B cell (primary cell): ENCODE measurements at regions of chr14 and their contacts with region 1.

Region 1: GRCh38 chr14:64986578-64987571 is at the start of gene FNTB:
- DNase-seq: peak; percentile 98
- ATAC-seq: peak; percentile 90
- H3K4me3 ChIP-seq: peak within 1 kb of the TSS; percentile 63 to 92 (median 84)
- H3K4me3 Mint-ChIP-seq: peak within 1 kb of the TSS; percentile 100
- H3K27ac ChIP-seq: peak within 1 kb of the TSS; percentile 65 to 70
- H3K27ac Mint-ChIP-seq: peak within 1 kb of the TSS; percentile 98
- H3K4me1 ChIP-seq: peaks cover 25% of the 10 kb centered on the region in 2 donors
- H3K4me1 Mint-ChIP-seq: peaks cover 41% of the 10 kb centered on the region
- H3K27me3 ChIP-seq: peaks cover 0 to 6% (median 3%) of the 10 kb centered on the region in 4 experiments
- H3K27me3 Mint-ChIP-seq: peaks cover 18% of the 10 kb centered on the region
- CTCF ChIP-seq: peak; percentile 79
- total RNA-seq, gene FNTB: 7.7 and 10.2 TPM in 2 replicates

Region 2: GRCh38 chr14:64400829-64401459 is 585.9 kb before region 1 on chr14:
- CTCF ChIA-PET with region 1: no interaction called
- POLR2A ChIA-PET with region 1: no interaction called
- intact Hi-C with region 1: no loop called
- DNase-seq: no peak
- ATAC-seq: no peak
- H3K4me3 ChIP-seq: peak overlapping the region in 1 of 5 experiments; percentile 3
- H3K4me3 Mint-ChIP-seq: peak overlapping the region; percentile 23
- H3K27ac ChIP-seq: no peak overlapping the region
- H3K27ac Mint-ChIP-seq: peak overlapping the region; percentile 10
- H3K4me1 ChIP-seq: peaks cover 0 to 9% of the 10 kb centered on the region in 2 donors
- H3K4me1 Mint-ChIP-seq: peaks cover 8% of the 10 kb centered on the region
- H3K27me3 ChIP-seq: no peaks in the 10 kb centered on the region
- H3K27me3 Mint-ChIP-seq: no peaks in the 10 kb centered on the region
- CTCF ChIP-seq: no peak

Region 3: DNA sequence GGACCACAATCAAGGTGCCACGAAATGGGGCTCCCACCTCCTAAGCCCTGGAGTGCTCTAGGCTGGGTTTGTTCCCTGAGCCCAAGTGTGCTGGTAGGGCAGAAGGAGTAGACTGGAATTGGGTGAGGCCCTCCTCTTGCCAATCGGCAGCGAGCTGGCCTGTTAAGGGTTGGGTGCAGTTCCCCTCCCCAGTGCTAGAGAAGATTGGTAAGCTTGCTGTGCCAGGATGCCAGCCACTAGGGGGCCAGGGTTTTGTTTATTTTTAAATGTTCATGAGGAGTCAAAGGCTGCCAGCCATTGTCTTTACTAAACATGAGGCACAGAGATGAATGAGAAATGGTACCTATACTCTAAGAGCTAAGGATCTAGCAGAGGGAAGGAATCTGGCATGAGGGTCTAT is 186.9 kb before region 1 on chr14:
- CTCF ChIA-PET with region 1: no interaction called
- POLR2A ChIA-PET with region 1: no interaction called
- intact Hi-C with region 1: loop called (anchors 5 kb)
- DNase-seq: no peak
- ATAC-seq: no peak
- H3K4me3 ChIP-seq: no peak overlapping the region
- H3K4me3 Mint-ChIP-seq: no peak overlapping the region
- H3K27ac ChIP-seq: no peak overlapping the region
- H3K27ac Mint-ChIP-seq: no peak overlapping the region
- H3K4me1 ChIP-seq: no peaks in the 10 kb centered on the region
- H3K4me1 Mint-ChIP-seq: no peaks in the 10 kb centered on the region
- H3K27me3 ChIP-seq: peaks cover 0 to 6% (median 0%) of the 10 kb centered on the region in 4 experiments
- H3K27me3 Mint-ChIP-seq: peaks cover 32% of the 10 kb centered on the region
- CTCF ChIP-seq: peak; percentile 22

Region 4: GRCh38 chr14:64971943-64972791 is 14.7 kb before region 1 on chr14 and contains the start of gene RAB15:
- CTCF ChIA-PET with region 1: interaction called, 9 read pairs
- POLR2A ChIA-PET with region 1: interaction called, 4 read pairs
- intact Hi-C with region 1: loop called (anchors 2 kb)
- DNase-seq: peak; percentile 50
- ATAC-seq: peak; percentile 71
- H3K4me3 ChIP-seq: peak within 1 kb of the TSS in 4 of 5 experiments; percentile 44 to 65 (median 62)
- H3K4me3 Mint-ChIP-seq: peak within 1 kb of the TSS; percentile 83
- H3K27ac ChIP-seq: no peak within 1 kb of the TSS
- H3K27ac Mint-ChIP-seq: no peak within 1 kb of the TSS
- H3K4me1 ChIP-seq: peaks cover 11% of the 10 kb centered on the region in 2 donors
- H3K4me1 Mint-ChIP-seq: peaks cover 6% of the 10 kb centered on the region
- H3K27me3 ChIP-seq: peaks cover 0 to 27% (median 9%) of the 10 kb centered on the region in 4 experiments
- H3K27me3 Mint-ChIP-seq: peaks cover 19% of the 10 kb centered on the region
- CTCF ChIP-seq: no peak
- total RNA-seq, gene RAB15: 0.17 and 0.32 TPM in 2 replicates

Region 5: DNA sequence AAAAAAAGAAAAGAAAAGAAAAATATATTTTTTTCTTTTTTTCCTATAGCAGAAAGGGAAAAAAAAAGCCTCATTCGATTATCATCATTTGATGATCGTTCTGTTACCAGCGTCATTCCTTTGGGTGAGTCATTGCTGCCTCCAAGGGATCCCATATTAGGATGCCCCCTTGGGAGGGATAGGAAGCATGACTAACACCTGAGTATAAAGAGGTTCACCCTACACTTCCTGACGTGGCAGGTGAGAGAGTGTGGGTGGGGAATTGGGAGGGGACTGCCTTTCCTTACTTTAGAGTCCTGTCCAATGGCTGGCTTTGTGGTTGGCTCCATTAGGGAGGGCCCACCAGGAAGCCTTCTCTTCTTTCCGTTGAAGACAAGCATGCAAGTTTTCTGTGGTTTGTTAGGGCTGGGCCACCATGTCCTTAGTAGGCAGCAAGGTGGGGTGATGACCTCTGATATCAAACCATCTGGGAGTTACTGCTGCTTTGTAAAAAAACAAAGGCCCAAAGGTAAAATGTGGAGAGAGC is 369.5 kb after region 1 on chr14:
- CTCF ChIA-PET with region 1: no interaction called
- POLR2A ChIA-PET with region 1: no interaction called
- intact Hi-C with region 1: loop called (anchors 5 kb)
- DNase-seq: no peak
- ATAC-seq: no peak
- H3K4me3 ChIP-seq: no peak overlapping the region
- H3K4me3 Mint-ChIP-seq: no peak overlapping the region
- H3K27ac ChIP-seq: peak overlapping the region; percentile 40 to 61
- H3K27ac Mint-ChIP-seq: peak overlapping the region; percentile 79
- H3K4me1 ChIP-seq: peaks cover 58 to 84% of the 10 kb centered on the region in 2 donors
- H3K4me1 Mint-ChIP-seq: peaks cover 73% of the 10 kb centered on the region
- H3K27me3 ChIP-seq: no peaks in the 10 kb centered on the region
- H3K27me3 Mint-ChIP-seq: no peaks in the 10 kb centered on the region
- CTCF ChIP-seq: no peak

Region 6: GRCh38 chr14:65824285-65824977 is 837.6 kb after region 1 on chr14:
- CTCF ChIA-PET with region 1: interaction called, 15 read pairs
- POLR2A ChIA-PET with region 1: no interaction called
- intact Hi-C with region 1: loop called (anchors 1 kb)
- DNase-seq: peak; percentile 80
- ATAC-seq: peak; percentile 98
- H3K4me3 ChIP-seq: no peak overlapping the region
- H3K4me3 Mint-ChIP-seq: no peak overlapping the region
- H3K27ac ChIP-seq: no peak overlapping the region
- H3K27ac Mint-ChIP-seq: no peak overlapping the region
- H3K4me1 ChIP-seq: peaks cover 0 to 2% of the 10 kb centered on the region in 2 donors
- H3K4me1 Mint-ChIP-seq: peaks cover 3% of the 10 kb centered on the region
- H3K27me3 ChIP-seq: no peaks in the 10 kb centered on the region
- H3K27me3 Mint-ChIP-seq: peaks cover 3% of the 10 kb centered on the region
- CTCF ChIP-seq: peak; percentile 98